Left colon (tissue), 2 donors: ENCODE measurements at regions of chr16 and their contacts with region 1.

Region 1: GRCh38 chr16:67667817-67668494 is 1.3 kb downstream of the C16orf86 start:
- DNase-seq: peak; percentile 85
- ATAC-seq: peak; percentile 78

Region 2: DNA sequence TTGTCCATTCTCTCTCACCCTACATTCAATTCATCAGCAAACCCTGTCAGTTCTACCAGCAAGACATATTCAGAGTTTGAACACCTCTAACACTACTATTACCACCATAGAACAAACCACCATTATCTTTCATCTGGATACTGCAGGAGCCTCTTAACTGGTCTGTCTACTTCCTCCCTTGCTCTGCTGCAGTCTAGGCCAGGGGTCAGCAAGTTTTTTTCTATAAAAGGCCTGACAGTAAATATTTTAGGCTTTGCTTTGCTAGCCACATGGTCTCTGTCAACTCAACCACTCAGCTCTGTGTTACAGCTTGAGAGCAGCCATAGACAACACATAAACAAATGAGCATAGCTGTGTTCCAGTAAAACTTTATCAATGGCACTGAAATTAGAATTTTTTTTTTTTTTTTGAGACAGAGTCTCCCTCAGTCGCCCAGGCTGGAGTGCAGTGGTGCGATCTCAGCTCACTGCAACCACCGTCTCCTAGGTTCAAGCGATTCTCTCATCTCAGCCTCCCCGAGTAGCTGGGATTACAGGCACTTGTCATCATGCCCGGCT is 355.2 kb before region 1 on chr16:
- intact Hi-C with region 1: no loop called
- DNase-seq: no peak
- ATAC-seq: no peak

Region 3: GRCh38 chr16:67521095-67521804 is 146.7 kb before region 1 on chr16:
- intact Hi-C with region 1: loop called in 1 of 2 experiments (anchors 5 kb)
- DNase-seq: peak; percentile 92 to 98
- ATAC-seq: peak; percentile 90